Activated naive CD8-positive, alpha-beta T cell treated with anti-CD3 and anti-CD28 coated beads, Interleukin-2, amount 10 ng/mL, durations not matched to agents 7 days and 5 days (primary cell): ENCODE measurements at regions of chr15 and their contacts with region 1.

Region 1: GRCh38 chr15:85380217-85380811 is at the start of gene AKAP13:
- DNase-seq: peak; percentile 89
- ATAC-seq: peak; percentile 85
- H3K4me3 Mint-ChIP-seq: peak within 1 kb of the TSS; percentile 85
- H3K27ac Mint-ChIP-seq: peak within 1 kb of the TSS; percentile 90
- H3K4me1 Mint-ChIP-seq: peaks cover 43% of the 10 kb centered on the region
- H3K27me3 Mint-ChIP-seq: no peaks in the 10 kb centered on the region
- total RNA-seq, gene AKAP13: 198 to 220 TPM

Region 2: DNA sequence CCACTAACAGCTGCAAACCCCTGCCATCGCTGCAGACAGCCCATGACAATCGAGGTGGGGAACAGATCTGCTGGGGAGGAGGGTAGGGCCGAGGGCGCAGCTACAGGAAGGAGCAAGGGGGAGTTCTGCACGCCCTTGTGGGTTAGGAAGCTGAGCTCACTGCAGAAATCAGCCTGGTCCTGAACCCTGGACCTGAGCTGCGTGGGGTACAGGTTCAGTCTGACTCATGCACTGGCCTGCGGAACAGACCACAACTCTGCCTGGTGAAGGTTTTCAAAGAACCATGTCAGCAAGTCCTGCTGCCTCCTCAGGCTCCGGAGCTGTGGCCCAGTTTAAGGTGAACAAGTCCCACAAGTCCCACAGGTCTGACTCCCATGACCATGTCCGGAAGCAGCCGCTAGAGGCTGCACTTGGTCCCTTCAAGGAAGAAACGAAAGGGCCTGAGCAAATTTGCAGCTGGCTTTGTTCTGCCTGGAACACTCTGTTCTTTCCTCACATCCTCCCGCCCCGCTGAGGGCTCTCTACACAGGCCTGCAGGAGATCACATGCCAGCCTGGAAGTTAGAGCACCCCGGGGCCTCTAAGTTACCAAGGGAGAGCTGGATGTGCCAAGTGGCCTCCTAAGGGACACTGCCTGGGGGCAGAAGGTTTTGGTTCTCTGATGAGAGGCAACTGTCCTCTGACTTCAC is 49.3 kb before region 1 on chr15:
- POLR2A ChIA-PET with region 1: interaction called, 30 read pairs
- DNase-seq: peak; percentile 81
- ATAC-seq: peak; percentile 86
- H3K4me3 Mint-ChIP-seq: peak overlapping the region; percentile 96
- H3K27ac Mint-ChIP-seq: peak overlapping the region; percentile 94
- H3K4me1 Mint-ChIP-seq: peaks cover 38% of the 10 kb centered on the region
- H3K27me3 Mint-ChIP-seq: peaks cover 4% of the 10 kb centered on the region